ENCODE measurements at regions of chr1 and their contacts with region 1.

Region 1: GRCh38 chr1:151130987-151131586 is 15.3 kb downstream of the SEMA6C start:
- DNase-seq: peak; percentile 82
- ATAC-seq: peak; percentile 98
- H3K4me3 Mint-ChIP-seq: peak overlapping the region; percentile 64
- H3K27ac Mint-ChIP-seq: peak overlapping the region; percentile 1
- H3K4me1 Mint-ChIP-seq: peaks cover 15% of the 10 kb centered on the region
- H3K27me3 Mint-ChIP-seq: peaks cover 16% of the 10 kb centered on the region

Region 2: DNA sequence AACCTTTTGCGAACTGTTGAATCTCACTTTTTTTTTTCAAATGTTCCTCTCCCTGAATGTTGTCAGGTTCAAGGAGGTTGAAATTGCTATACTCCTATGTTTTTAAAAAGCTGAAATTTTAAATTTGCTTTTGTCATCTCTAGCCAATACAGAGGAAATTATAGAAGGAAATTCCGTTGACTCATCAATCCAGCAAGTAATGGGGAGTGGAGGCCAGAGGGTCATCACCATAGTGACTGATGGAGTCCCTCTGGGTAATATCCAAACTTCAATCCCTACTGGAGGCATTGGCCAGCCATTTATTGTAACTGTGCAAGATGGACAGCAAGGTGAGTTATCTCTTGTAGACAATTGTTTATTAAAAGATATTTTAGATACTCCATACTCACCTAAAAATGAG is 24.2 kb before region 1 on chr1:
- CTCF ChIA-PET with region 1: no interaction called
- DNase-seq: no peak
- ATAC-seq: no peak
- H3K4me3 Mint-ChIP-seq: no peak overlapping the region
- H3K27ac Mint-ChIP-seq: no peak overlapping the region
- H3K4me1 Mint-ChIP-seq: no peaks in the 10 kb centered on the region
- H3K27me3 Mint-ChIP-seq: no peaks in the 10 kb centered on the region

Region 3: DNA sequence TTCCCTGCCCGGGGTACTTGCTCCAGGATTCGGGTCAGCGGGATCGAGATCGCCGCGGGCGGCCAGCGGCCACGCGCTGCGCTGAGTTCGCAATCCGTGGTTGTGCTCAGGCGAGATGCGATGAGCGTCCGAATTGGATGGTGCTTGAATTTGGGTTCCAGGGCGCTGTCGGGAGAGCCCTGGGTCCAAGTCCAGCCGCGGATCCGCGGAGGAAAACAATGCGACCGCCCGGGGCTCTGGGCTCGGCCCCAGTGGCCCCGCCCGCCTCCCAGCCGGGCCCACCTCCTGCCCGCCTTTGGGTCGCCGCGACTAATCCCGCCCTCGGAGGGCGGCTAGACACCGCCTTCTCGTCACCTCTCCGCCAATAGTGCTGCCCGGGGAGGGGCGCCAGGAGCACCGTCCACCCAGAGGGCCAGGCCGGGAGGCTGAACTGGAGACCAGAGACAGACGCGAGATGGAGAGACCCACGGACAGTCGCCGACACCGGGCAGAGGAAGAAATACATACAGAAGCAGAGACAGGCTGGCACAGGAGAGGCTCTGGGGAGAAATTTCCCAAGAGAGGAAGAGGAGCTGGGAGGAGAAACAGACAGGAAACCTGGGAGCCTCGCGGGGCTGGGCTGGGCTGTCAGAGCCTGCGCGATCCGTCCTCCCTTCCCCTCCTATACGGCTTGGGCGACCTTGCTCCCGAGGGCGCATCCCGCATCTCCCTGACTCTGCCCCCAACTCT is 15.5 kb after region 1 on chr1 and contains the start of gene SEMA6C:
- CTCF ChIA-PET with region 1: interaction called, 10 read pairs
- DNase-seq: peak; percentile 92
- ATAC-seq: peak; percentile 100
- H3K4me3 Mint-ChIP-seq: peak within 1 kb of the TSS; percentile 85
- H3K27ac Mint-ChIP-seq: peak within 1 kb of the TSS; percentile 50
- H3K4me1 Mint-ChIP-seq: peaks cover 10% of the 10 kb centered on the region
- H3K27me3 Mint-ChIP-seq: peaks cover 24% of the 10 kb centered on the region
- total RNA-seq, gene SEMA6C: 0.84 to 1.7 TPM

Region 4: DNA sequence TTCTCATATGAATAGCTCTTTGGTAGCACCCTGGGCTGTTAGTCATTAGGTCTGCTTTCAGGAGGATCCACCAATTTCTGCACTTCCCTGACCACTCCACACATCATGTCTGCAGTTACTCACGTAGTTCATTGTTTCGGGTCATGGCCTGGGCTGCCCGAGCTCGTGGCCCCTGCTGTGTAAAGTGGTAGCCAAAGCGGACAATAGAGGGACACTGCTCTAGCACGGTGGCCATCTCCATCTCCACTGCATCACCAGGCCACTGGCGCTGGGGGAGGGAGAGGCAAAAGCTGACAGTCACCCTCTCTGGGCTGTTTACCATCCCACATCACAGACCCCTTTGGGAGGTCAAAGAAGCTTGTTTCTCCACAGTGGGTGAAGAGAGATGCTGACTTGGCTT is 39.3 kb after region 1 on chr1:
- CTCF ChIA-PET with region 1: no interaction called
- DNase-seq: no peak
- ATAC-seq: no peak
- H3K4me3 Mint-ChIP-seq: no peak overlapping the region
- H3K27ac Mint-ChIP-seq: no peak overlapping the region
- H3K4me1 Mint-ChIP-seq: peaks cover 23% of the 10 kb centered on the region
- H3K27me3 Mint-ChIP-seq: no peaks in the 10 kb centered on the region